AG04449 (cell line): ENCODE measurements at regions of chr7 and their contacts with region 1.

Region 1: DNA sequence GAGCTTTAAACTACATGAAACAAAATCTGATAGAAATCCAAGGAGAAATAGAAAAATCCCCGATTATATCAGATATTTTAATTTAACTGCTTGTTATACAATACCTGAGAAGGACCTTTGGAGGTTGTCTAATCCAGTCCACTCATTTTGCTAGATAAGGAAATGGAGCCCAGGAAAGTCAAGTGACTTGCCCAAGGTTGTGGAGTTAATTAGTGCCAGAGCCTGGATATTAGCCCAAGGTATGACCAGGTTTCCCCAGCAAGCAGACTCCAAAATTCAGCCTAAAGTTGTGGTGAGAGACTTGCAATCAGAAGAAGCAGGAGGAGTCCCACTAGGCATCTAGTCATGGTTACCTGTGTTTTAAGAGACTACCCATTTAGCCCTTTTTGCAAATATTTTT is 11.7 kb upstream of the EEPD1 start:
- DNase-seq: no peak
- H3K4me3 ChIP-seq: no peak overlapping the region
- CTCF ChIP-seq: no peak

Region 2: DNA sequence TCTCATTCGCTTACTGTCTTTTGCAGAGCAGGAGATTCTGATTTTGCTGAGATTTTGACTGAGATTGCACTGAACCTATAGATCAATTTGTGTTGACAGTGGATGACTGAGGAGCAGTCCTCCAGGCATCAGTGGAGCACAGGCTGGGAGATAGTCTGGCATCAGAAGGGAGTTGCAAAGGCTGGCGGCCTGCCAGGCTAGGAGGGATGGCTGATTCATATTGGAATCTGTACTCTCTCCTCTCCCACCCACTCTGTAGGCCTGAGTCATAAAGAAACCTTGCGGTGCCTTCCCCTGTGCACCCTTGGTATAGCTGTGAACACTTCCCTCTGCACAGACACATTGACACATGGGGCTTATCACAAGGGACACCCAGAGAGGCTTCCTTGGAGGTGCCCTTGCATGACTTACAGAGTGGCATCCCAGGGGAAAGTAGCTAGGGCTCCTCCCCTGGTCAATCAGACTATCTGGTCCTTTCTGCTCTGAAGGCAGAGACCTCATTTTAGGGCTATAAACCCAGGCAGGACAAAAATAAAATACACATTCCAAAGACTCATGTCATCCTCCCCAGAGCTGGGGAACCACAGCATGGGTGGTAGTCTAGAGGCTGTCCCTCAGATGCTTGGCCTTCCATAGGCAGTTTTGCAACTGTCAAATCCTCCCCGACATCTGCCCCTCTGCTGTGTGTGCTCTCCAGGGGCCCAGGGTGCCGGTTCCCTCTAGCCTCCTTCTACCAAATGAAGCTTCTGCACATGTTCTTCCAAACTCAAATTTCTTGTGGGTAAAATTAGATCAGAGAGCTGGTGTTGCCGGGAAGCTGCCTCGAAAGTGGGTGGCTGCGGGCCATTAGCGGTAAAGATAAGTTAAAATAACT is 25.7 kb before region 1 on chr7:
- CTCF ChIA-PET with region 1: no interaction called
- POLR2A ChIA-PET with region 1: no interaction called
- DNase-seq: peak; percentile 85
- H3K4me3 ChIP-seq: peak overlapping the region; percentile 31; the same call in 1 of the 2 replicates
- CTCF ChIP-seq: no peak

Region 3: DNA sequence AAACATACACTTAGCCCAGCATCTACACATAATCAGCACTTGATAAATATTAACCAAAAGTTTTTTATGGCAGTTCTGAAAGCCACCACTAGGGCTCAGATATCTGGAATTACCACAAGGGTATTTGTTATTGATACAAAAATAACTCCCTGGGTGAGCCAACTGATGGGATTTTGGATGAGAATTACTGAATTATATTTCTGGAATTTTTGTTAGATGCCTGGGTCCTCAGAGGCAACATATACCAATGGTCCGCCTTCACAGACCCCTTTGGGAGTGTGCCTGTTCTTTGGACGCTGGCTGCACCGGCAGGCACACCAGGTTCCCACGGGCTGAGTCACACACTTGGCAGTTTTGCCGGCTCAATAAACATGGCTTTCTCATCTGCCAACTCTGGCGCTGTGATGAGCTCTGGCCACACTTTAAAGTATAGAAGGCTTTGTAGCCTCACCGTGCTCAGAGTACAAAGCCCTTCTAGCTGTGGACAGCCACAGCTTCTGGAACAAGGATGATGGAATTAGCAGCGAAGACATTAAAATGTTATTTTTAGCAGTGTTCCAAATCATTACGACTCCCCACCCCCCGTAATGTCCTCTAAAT is 12.8 kb before region 1 on chr7:
- CTCF ChIA-PET with region 1: interaction called, 13 read pairs
- POLR2A ChIA-PET with region 1: no interaction called
- DNase-seq: peak; percentile 47
- H3K4me3 ChIP-seq: no peak overlapping the region
- CTCF ChIP-seq: peak; percentile 37